SK-N-SH (cell line): ENCODE measurements at regions of chr6 and their contacts with region 1.

Region 1: GRCh38 chr6:27146706-27147505 is 100.6 kb upstream of the PRSS16 start:
- DNase-seq: peak; percentile 91
- H3K4me3 ChIP-seq: peak overlapping the region; percentile 66 to 94
- H3K27ac ChIP-seq: peak overlapping the region; percentile 94 to 96
- H3K4me1 ChIP-seq: peaks cover 0 to 8% of the 10 kb centered on the region in 2 experiments; a peak in 2 of 4 replicates
- H3K27me3 ChIP-seq: no peaks in the 10 kb centered on the region
- CTCF ChIP-seq: no peak
- EP300 ChIP-seq: peak in 1 of 2 experiments; percentile 32; a peak in 1 of 4 replicates
- RAD21 ChIP-seq: no peak

Region 2: GRCh38 chr6:26025894-26026832 is 1120.7 kb before region 1 on chr6:
- CTCF ChIA-PET with region 1: interaction called, 4 read pairs
- POLR2A ChIA-PET with region 1: interaction called, 11 read pairs
- DNase-seq: peak; percentile 59
- H3K4me3 ChIP-seq: peak overlapping the region; percentile 70 to 89
- H3K27ac ChIP-seq: peak overlapping the region; percentile 92 to 99
- H3K4me1 ChIP-seq: peaks cover 15 to 34% of the 10 kb centered on the region in 2 experiments; a peak in 3 of 4 replicates
- H3K27me3 ChIP-seq: no peaks in the 10 kb centered on the region
- CTCF ChIP-seq: peak; percentile 91
- EP300 ChIP-seq: peak in 1 of 2 experiments; percentile 22; a peak in 1 of 4 replicates
- RAD21 ChIP-seq: peak; percentile 24; the same call in 1 of the 2 replicates

Region 3: GRCh38 chr6:26285143-26286134 is 861.5 kb before region 1 on chr6:
- CTCF ChIA-PET with region 1: no interaction called
- POLR2A ChIA-PET with region 1: interaction called, 11 read pairs
- DNase-seq: peak; percentile 80
- H3K4me3 ChIP-seq: peak overlapping the region; percentile 78 to 89
- H3K27ac ChIP-seq: peak overlapping the region; percentile 95 to 98
- H3K4me1 ChIP-seq: no peaks in the 10 kb centered on the region; a peak in 2 of 4 replicates
- H3K27me3 ChIP-seq: no peaks in the 10 kb centered on the region
- CTCF ChIP-seq: no peak
- EP300 ChIP-seq: peak; percentile 84 to 99
- RAD21 ChIP-seq: 0 out of 2 replicates have a peak, but pooled peaks have one; percentile 4

Region 4: DNA sequence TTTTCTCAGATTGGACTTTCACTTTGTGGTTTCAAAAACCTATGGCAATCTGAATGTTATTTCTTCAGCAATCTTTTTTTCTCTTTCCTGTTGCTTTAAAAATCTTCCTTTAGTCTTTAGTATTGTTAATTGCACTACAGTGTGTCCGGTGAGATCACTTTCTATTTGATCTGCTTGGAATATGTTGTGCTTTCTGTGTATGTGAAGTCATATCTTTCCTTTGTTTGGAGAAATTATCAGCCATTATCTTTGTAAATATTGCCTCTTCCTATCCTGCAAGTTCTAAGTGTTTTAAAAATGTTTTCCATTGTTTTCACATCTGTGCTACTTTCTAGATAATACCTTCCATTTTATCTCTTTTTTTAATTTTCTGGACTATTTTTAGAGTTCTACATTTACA is 70.8 kb before region 1 on chr6:
- CTCF ChIA-PET with region 1: no interaction called
- POLR2A ChIA-PET with region 1: no interaction called
- DNase-seq: no peak
- H3K4me3 ChIP-seq: no peak overlapping the region
- H3K27ac ChIP-seq: no peak overlapping the region
- H3K4me1 ChIP-seq: peaks cover 0 to 2% of the 10 kb centered on the region in 2 experiments; a peak in 1 of 4 replicates
- H3K27me3 ChIP-seq: no peaks in the 10 kb centered on the region
- CTCF ChIP-seq: no peak
- EP300 ChIP-seq: no peak
- RAD21 ChIP-seq: no peak

Region 5: DNA sequence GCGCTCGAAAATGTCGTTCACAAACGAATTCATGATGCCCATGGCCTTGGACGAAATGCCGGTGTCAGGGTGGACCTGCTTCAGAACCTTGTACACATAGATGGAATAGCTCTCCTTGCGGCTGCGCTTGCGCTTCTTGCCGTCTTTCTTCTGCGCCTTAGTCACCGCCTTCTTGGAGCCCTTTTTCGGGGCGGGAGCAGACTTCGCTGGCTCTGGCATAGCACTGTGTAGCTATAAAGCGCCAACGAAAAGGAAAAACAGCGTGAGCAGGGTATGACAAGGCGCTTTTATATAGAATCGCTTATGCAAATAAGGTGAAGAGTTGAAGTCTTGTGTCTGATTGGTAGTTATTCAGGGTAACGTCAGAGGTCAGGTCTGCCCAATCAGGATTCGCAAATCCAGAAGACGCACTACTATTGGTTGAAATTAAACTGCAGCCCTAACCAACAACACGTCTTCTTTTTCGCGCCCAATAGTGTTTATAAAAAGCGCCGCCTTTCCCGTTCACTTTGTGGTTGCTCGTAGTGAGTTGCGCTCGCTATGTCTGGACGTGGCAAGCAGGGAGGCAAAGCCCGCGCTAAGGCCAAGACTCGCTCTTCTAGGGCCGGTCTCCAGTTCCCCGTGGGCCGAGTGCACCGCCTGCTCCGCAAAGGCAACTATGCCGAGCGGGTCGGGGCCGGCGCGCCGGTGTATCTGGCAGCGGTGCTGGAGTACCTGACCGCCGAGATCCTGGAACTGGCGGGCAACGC is 14.2 kb before region 1 on chr6:
- CTCF ChIA-PET with region 1: interaction called, 10 read pairs
- POLR2A ChIA-PET with region 1: interaction called, 158 read pairs
- DNase-seq: peak; percentile 93
- H3K4me3 ChIP-seq: peak overlapping the region; percentile 72 to 73
- H3K27ac ChIP-seq: peak overlapping the region; percentile 91 to 97
- H3K4me1 ChIP-seq: peaks cover 4 to 6% of the 10 kb centered on the region in 2 experiments; a peak in 3 of 4 replicates
- H3K27me3 ChIP-seq: no peaks in the 10 kb centered on the region
- CTCF ChIP-seq: no peak
- EP300 ChIP-seq: peak in 1 of 2 experiments; percentile 43; a peak in 1 of 4 replicates
- RAD21 ChIP-seq: no peak

Region 6: DNA sequence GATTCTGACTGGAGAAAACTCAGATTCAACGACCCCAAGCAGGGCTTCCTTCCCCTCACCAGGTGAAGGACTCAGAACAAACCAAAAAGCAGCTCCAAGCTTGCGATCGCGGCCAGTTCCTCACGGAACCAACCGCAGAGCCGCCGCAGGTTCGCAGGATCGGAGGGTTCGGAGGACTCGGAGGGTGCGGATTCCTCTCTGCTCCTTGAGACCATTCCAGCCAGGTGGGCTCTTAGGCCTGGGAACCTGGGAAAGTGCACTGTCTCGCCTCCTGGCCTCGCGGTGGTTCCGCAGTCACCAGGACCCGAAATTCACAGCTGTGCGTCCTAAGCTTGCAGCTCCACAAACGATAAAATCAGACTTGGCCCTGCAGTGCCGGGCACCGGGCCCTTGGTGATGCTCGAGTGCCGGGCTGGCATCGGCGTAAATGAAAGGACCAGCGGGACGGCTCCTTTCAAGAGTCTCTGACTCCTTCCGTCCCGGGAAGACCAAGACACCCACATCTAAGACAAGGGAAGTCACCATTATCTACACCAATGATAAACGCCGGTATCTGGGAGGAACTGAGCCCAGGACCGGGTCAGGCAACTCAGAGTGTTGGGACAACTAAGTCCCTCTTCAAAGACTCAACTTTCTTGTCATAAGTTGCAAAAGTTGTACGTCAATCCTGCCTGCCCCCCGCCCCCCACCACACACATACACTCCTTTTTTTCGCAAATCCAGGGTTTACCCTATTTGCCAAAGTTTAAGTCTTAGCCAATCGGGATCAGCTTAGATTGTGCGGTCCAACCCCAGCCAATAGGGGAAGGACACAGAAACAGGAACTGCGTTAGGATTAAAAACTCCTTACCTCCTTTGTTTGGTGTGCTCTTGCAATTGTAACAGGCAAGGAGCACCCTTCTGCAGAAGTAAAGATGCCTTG is 30.8 kb after region 1 on chr6:
- CTCF ChIA-PET with region 1: interaction called, 5 read pairs
- POLR2A ChIA-PET with region 1: interaction called, 18 read pairs
- DNase-seq: peak; percentile 72
- H3K4me3 ChIP-seq: peak overlapping the region; percentile 98 to 100
- H3K27ac ChIP-seq: peak overlapping the region; percentile 81 to 85
- H3K4me1 ChIP-seq: peaks cover 0 to 3% of the 10 kb centered on the region in 2 experiments; a peak in 1 of 4 replicates
- H3K27me3 ChIP-seq: no peaks in the 10 kb centered on the region
- CTCF ChIP-seq: peak; percentile 63
- EP300 ChIP-seq: no peak
- RAD21 ChIP-seq: peak; percentile 47

Region 7: GRCh38 chr6:27414996-27415395 is 268.1 kb after region 1 on chr6:
- CTCF ChIA-PET with region 1: no interaction called
- POLR2A ChIA-PET with region 1: no interaction called
- DNase-seq: no peak
- H3K4me3 ChIP-seq: no peak overlapping the region
- H3K27ac ChIP-seq: no peak overlapping the region
- H3K4me1 ChIP-seq: no peaks in the 10 kb centered on the region
- H3K27me3 ChIP-seq: no peaks in the 10 kb centered on the region
- CTCF ChIP-seq: no peak
- EP300 ChIP-seq: no peak
- RAD21 ChIP-seq: no peak

Region 8: DNA sequence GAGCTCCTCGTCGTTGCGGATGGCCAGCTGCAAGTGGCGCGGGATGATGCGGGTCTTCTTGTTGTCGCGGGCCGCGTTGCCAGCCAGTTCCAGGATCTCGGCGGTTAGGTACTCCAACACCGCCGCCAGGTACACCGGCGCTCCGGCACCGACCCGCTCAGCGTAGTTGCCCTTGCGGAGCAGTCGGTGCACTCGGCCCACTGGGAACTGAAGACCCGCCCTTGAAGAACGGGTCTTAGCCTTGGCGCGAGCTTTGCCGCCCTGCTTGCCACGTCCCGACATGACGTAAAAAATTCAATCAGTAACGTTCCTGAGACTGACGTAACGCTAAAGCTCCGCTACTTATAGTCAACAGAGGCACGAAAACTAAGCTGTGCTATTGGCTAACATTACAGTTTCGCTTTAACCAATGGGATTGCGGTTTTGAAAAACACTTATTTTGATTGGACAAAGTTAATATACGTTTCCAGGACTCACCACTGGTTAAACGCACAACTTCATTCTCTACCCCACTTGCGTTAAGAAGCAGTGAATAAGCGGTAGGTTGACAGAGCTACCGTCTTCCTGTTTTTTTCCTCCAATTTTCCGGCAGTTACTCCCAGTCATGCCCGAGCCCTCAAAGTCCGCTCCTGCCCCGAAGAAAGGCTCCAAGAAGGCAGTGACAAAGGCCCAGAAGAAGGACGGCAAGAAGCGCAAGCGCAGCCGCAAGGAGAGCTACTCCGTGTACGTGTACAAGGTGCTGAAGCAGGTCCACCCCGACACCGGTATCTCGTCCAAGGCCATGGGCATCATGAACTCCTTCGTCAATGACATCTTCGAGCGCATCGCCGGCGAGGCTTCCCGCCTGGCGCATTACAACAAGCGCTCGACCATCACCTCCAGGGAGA is 691.4 kb after region 1 on chr6:
- CTCF ChIA-PET with region 1: no interaction called
- POLR2A ChIA-PET with region 1: interaction called, 20 read pairs
- DNase-seq: peak; percentile 84
- H3K4me3 ChIP-seq: peak overlapping the region; percentile 83 to 84
- H3K27ac ChIP-seq: peak overlapping the region; percentile 97 to 99
- H3K4me1 ChIP-seq: peaks cover 0 to 11% of the 10 kb centered on the region in 2 experiments; a peak in 2 of 4 replicates
- H3K27me3 ChIP-seq: no peaks in the 10 kb centered on the region
- CTCF ChIP-seq: no peak
- EP300 ChIP-seq: peak in 1 of 2 experiments; percentile 26; a peak in 1 of 4 replicates
- RAD21 ChIP-seq: no peak

Region 9: GRCh38 chr6:28863604-28864320 is 1716.9 kb after region 1 on chr6:
- CTCF ChIA-PET with region 1: no interaction called
- POLR2A ChIA-PET with region 1: interaction called, 11 read pairs
- DNase-seq: peak; percentile 69
- H3K4me3 ChIP-seq: peak overlapping the region; percentile 91 to 97
- H3K27ac ChIP-seq: peak overlapping the region; percentile 61 to 76
- H3K4me1 ChIP-seq: peaks cover 0 to 11% of the 10 kb centered on the region in 2 experiments; a peak in 2 of 4 replicates
- H3K27me3 ChIP-seq: peaks cover 8% of the 10 kb centered on the region; the same call in 1 of the 2 replicates
- CTCF ChIP-seq: no peak
- EP300 ChIP-seq: no peak
- RAD21 ChIP-seq: no peak